ENCODE measurements at regions of chr13 and their contacts with region 1.

Region 1: GRCh38 chr13:93227878-93228642 is 1.5 kb downstream of the GPC6 start:
- DNase-seq: peak; percentile 92
- H3K4me3 Mint-ChIP-seq: peak overlapping the region; percentile 93
- H3K27ac Mint-ChIP-seq: peak overlapping the region; percentile 86
- H3K4me1 Mint-ChIP-seq: peaks cover 46% of the 10 kb centered on the region
- H3K27me3 Mint-ChIP-seq: no peaks in the 10 kb centered on the region
- CTCF ChIP-seq: peak; percentile 61

Region 2: GRCh38 chr13:92896842-92897241 is 331.2 kb before region 1 on chr13:
- CTCF ChIA-PET with region 1: interaction called, 3 read pairs
- POLR2A ChIA-PET with region 1: interaction called, 3 read pairs
- intact Hi-C with region 1: loop called (anchors 2 kb)
- DNase-seq: peak; percentile 64
- H3K4me3 Mint-ChIP-seq: no peak overlapping the region
- H3K27ac Mint-ChIP-seq: no peak overlapping the region
- H3K4me1 Mint-ChIP-seq: peaks cover 13% of the 10 kb centered on the region
- H3K27me3 Mint-ChIP-seq: no peaks in the 10 kb centered on the region
- CTCF ChIP-seq: peak; percentile 28

Region 3: GRCh38 chr13:93248627-93249047 is 20.6 kb after region 1 on chr13:
- CTCF ChIA-PET with region 1: interaction called, 22 read pairs
- POLR2A ChIA-PET with region 1: interaction called, 64 read pairs
- intact Hi-C with region 1: no loop called
- DNase-seq: peak; percentile 53
- H3K4me3 Mint-ChIP-seq: no peak overlapping the region
- H3K27ac Mint-ChIP-seq: peak overlapping the region; percentile 97
- H3K4me1 Mint-ChIP-seq: peaks cover 37% of the 10 kb centered on the region
- H3K27me3 Mint-ChIP-seq: no peaks in the 10 kb centered on the region
- CTCF ChIP-seq: peak; percentile 24

Region 4: GRCh38 chr13:93603043-93603442 is 375.0 kb after region 1 on chr13:
- CTCF ChIA-PET with region 1: no interaction called
- POLR2A ChIA-PET with region 1: no interaction called
- intact Hi-C with region 1: loop called (anchors 2 kb)
- DNase-seq: peak; percentile 92
- H3K4me3 Mint-ChIP-seq: no peak overlapping the region
- H3K27ac Mint-ChIP-seq: peak overlapping the region; percentile 65
- H3K4me1 Mint-ChIP-seq: peaks cover 6% of the 10 kb centered on the region
- H3K27me3 Mint-ChIP-seq: no peaks in the 10 kb centered on the region
- CTCF ChIP-seq: no peak

Region 5: GRCh38 chr13:93963266-93964145 is 735.4 kb after region 1 on chr13:
- CTCF ChIA-PET with region 1: no interaction called
- POLR2A ChIA-PET with region 1: no interaction called
- intact Hi-C with region 1: loop called (anchors 5 kb)
- DNase-seq: peak; percentile 68
- H3K4me3 Mint-ChIP-seq: no peak overlapping the region
- H3K27ac Mint-ChIP-seq: peak overlapping the region; percentile 31
- H3K4me1 Mint-ChIP-seq: peaks cover 5% of the 10 kb centered on the region
- H3K27me3 Mint-ChIP-seq: no peaks in the 10 kb centered on the region
- CTCF ChIP-seq: no peak

Region 6: DNA sequence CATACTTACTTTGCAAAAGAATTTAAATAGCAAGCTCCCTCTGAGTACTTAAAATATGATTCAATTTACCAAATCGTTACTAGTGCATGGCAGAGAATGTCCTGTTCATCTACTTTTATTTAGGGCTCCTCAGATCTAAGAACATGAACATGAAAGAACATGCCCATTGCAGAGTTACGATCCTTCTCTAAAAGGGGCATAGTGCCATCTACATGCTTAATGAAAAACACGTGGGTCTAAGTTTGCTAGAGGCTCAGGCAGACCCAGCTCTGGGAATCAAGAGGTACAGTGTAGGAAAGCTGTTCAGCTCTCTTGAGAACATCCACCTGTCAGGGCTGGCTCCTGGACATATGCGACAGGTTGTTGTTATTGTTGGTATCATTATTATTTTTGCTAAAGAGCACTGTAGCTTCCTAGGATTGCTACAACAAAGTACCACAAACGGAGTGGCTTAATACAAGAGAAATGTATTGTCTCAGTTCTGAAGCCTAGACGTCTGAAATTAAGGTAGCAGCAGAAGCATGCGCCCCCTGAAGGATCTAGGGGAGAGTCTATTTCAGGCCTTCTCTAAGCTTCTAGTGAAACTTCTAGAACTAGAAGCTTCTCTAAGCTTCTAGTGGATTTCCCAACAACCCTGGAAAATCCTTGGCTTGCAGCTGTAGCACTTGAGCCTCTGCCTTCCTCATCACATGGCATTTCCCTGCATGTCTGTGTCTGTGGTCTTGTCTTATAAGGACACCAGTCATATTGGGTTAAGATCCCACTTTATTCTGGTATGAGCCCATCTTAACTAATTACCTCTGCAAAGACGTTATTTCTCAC is 1117.5 kb after region 1 on chr13:
- CTCF ChIA-PET with region 1: interaction called, 12 read pairs
- POLR2A ChIA-PET with region 1: interaction called, 7 read pairs
- intact Hi-C with region 1: loop called (anchors 1 kb)
- DNase-seq: peak; percentile 74
- H3K4me3 Mint-ChIP-seq: no peak overlapping the region
- H3K27ac Mint-ChIP-seq: peak overlapping the region; percentile 88
- H3K4me1 Mint-ChIP-seq: peaks cover 14% of the 10 kb centered on the region
- H3K27me3 Mint-ChIP-seq: no peaks in the 10 kb centered on the region
- CTCF ChIP-seq: peak; percentile 21